WTC11 (cell line): ENCODE measurements at regions of chr20 and their contacts with region 1.

Region 1: GRCh38 chr20:35146920-35147574 is at the start of gene EDEM2:
- DNase-seq: peak; percentile 97
- ATAC-seq: peak; percentile 93
- H3K4me3 Mint-ChIP-seq: peak within 1 kb of the TSS; percentile 95
- H3K27ac Mint-ChIP-seq: peak within 1 kb of the TSS; percentile 98
- H3K4me1 Mint-ChIP-seq: peaks cover 18% of the 10 kb centered on the region
- H3K27me3 Mint-ChIP-seq: no peaks in the 10 kb centered on the region
- CTCF ChIP-seq: no peak
- total RNA-seq, gene EDEM2: 22.7 to 24.2 TPM (median 24.0 TPM) in 3 replicates

Region 2: DNA sequence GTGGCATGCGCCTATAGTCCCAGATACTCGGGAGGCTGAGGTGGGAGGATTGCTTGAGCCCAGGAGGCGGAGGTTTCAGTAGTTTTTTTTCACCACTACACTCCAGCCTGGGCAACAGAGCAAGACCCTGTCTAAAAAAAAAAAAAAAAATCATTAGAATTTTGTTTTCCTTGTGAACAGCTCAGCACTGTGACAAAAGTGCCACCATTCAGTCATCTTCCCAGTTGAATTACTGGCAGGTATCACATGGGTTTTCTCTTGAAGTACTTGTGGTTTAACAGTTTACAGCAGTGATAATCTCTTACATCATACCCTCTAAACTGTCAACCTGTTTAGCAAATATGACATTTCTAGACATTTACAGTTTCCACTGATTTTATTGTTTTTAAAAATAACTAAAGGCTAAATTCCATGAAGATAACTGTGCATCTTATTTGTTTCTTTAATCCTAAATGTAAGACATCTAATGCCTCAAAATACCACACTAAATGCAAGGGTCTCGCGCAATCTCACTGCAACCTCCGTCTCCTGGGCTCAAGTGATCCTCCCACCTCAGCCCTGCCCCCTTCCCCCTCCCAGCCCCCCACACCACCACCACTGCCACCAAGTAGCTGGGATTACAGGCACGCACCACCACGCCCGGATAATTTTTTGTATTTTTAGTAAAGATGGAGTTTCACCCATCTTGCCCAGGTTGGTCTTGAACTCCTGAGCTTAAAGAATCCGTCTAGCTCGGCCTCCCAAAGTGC is 61.4 kb before region 1 on chr20:
- CTCF ChIA-PET with region 1: no interaction called
- POLR2A ChIA-PET with region 1: no interaction called
- DNase-seq: no peak
- ATAC-seq: no peak
- H3K4me3 Mint-ChIP-seq: no peak overlapping the region
- H3K27ac Mint-ChIP-seq: no peak overlapping the region
- H3K4me1 Mint-ChIP-seq: peaks cover 12% of the 10 kb centered on the region
- H3K27me3 Mint-ChIP-seq: no peaks in the 10 kb centered on the region
- CTCF ChIP-seq: no peak

Region 3: GRCh38 chr20:35207950-35208611 is 61.0 kb after region 1 on chr20:
- CTCF ChIA-PET with region 1: interaction called, 72 read pairs
- POLR2A ChIA-PET with region 1: no interaction called
- DNase-seq: peak; percentile 79
- ATAC-seq: peak; percentile 96
- H3K4me3 Mint-ChIP-seq: no peak overlapping the region
- H3K27ac Mint-ChIP-seq: no peak overlapping the region
- H3K4me1 Mint-ChIP-seq: no peaks in the 10 kb centered on the region
- H3K27me3 Mint-ChIP-seq: no peaks in the 10 kb centered on the region
- CTCF ChIP-seq: peak; percentile 57

Region 4: GRCh38 chr20:35240083-35240812 is 93.2 kb after region 1 on chr20:
- CTCF ChIA-PET with region 1: interaction called, 12 read pairs
- POLR2A ChIA-PET with region 1: no interaction called
- DNase-seq: no peak
- ATAC-seq: no peak
- H3K4me3 Mint-ChIP-seq: no peak overlapping the region
- H3K27ac Mint-ChIP-seq: no peak overlapping the region; the same call in 1 of the 2 replicates
- H3K4me1 Mint-ChIP-seq: peaks cover 15% of the 10 kb centered on the region
- H3K27me3 Mint-ChIP-seq: peaks cover 4% of the 10 kb centered on the region
- CTCF ChIP-seq: no peak

Region 5: DNA sequence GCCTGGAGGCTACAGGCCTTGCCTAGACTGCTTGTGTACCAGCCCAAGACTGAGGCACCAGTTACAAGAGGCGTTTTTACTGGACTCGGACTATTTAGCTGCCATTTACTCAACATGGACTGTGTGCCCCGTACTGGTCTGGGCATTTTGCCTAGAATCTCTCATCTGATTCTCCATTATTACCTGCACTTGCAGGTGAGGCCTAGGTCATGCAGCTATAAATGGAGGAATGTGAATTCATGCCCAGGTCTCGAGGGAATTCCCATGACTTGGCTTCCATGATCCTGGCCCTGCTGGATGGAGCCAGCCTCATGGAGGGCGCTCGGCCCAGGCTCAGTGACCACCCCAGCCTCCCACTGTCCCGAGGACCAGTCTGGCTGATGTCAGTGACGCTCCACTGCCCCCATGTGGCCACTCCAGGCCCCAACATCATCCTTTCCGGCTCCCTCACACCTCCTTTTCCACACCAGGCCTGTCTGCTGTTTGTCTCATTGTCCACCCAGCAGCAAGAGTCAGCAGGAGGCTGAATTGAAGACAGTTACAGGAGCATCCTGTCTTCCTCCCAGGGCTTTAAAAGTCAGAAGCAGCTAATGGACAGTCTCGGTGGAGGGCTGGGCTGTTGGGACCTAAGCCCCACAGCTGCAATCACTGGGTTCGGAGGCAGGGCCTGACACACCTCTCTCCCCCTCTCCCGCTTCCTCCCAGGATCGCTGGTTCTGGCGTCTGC is 122.2 kb after region 1 on chr20:
- CTCF ChIA-PET with region 1: interaction called, 76 read pairs
- POLR2A ChIA-PET with region 1: interaction called, 24 read pairs
- DNase-seq: peak; percentile 91
- ATAC-seq: peak; percentile 84
- H3K4me3 Mint-ChIP-seq: no peak overlapping the region
- H3K27ac Mint-ChIP-seq: peak overlapping the region; percentile 86
- H3K4me1 Mint-ChIP-seq: peaks cover 37% of the 10 kb centered on the region
- H3K27me3 Mint-ChIP-seq: no peaks in the 10 kb centered on the region
- CTCF ChIP-seq: peak; percentile 78

Region 6: GRCh38 chr20:35303735-35304491 is 156.9 kb after region 1 on chr20:
- CTCF ChIA-PET with region 1: interaction called, 18 read pairs
- POLR2A ChIA-PET with region 1: no interaction called
- DNase-seq: peak; percentile 94
- ATAC-seq: peak; percentile 84
- H3K4me3 Mint-ChIP-seq: peak overlapping the region; percentile 21; the same call in 1 of the 2 replicates
- H3K27ac Mint-ChIP-seq: no peak overlapping the region
- H3K4me1 Mint-ChIP-seq: peaks cover 14% of the 10 kb centered on the region
- H3K27me3 Mint-ChIP-seq: peaks cover under 1% of the 10 kb centered on the region; the same call in 1 of the 2 replicates
- CTCF ChIP-seq: peak; percentile 89

Region 7: DNA sequence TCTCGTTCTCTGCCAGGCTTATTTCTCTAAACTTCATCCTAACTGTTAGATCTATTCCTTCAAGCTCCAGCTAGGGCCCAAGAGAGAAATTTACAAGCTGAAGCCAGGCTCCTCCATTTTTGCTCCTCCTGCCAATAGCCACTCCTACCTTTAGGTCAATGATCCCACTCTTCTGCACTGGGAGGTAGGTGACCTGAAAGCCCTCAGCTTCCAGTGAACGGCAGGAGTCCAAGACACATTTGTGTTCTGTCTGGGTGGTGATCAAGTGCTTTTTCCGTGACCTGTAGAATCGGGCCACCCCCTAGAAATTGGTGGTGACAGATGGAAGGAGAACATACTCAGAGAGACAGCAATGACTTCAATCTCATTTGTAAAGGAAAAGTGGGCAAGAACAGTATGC is 543.2 kb after region 1 on chr20:
- CTCF ChIA-PET with region 1: no interaction called
- POLR2A ChIA-PET with region 1: no interaction called
- DNase-seq: no peak
- ATAC-seq: no peak
- H3K4me3 Mint-ChIP-seq: no peak overlapping the region
- H3K27ac Mint-ChIP-seq: no peak overlapping the region
- H3K4me1 Mint-ChIP-seq: no peaks in the 10 kb centered on the region
- H3K27me3 Mint-ChIP-seq: no peaks in the 10 kb centered on the region
- CTCF ChIP-seq: no peak